CD4-positive, alpha-beta memory T cell (primary cell): ENCODE measurements at regions of chr12 and their contacts with region 1.

Region 1: DNA sequence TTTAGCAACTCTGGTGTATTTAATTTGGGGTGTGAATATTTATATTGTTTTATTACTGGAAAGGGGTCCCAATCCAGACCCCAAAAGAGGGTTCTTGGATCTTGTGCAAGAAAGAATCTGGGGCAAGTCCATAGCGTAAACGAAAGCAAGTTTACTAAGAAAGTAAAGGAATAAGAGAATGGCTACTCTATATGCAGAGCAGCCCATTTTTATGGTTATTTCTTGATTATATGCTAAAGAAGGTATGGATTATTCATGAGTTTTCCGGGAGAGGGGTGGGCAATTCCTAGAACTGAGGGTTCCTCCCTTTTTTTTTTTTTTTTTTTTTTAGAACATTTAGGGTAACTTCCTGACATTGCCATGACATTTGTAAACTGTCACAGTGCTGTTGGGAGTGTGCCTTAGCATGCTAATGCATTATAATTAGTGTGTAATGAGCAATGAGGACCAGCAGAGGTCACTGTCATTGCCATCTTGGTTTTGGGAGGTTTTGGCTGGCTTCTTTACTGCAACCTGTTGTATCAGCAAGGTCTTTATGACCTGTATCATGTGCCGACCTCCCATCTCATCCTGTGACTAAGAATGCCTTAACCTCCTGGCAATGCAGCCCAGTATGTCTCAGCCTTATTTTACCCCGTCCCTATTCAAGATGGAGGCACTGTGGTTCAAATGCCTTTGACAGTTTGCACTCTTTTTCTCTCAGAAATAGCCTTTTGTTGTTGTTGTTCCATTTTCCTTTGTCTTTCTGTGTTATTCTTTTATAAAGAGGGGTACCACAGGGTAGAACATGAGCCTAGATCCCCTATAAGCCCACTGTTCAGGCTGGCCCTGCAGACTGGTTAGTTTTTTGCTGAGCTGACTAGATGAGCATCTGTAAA is 75.5 kb upstream of the DCD start:
- DNase-seq: peak; percentile 38 to 54 (median 44)
- H3K4me3 ChIP-seq: no peak overlapping the region
- H3K4me3 Mint-ChIP-seq: no peak overlapping the region
- H3K27ac ChIP-seq: no peak overlapping the region
- H3K27ac Mint-ChIP-seq: no peak overlapping the region
- H3K4me1 ChIP-seq: peaks cover 4% of the 10 kb centered on the region
- H3K4me1 Mint-ChIP-seq: peaks cover 5 to 32% (median 12%) of the 10 kb centered on the region in 4 donors
- H3K27me3 ChIP-seq: no peaks in the 10 kb centered on the region
- H3K27me3 Mint-ChIP-seq: peaks cover 7 to 10% of the 10 kb centered on the region in 2 donors

Region 2: DNA sequence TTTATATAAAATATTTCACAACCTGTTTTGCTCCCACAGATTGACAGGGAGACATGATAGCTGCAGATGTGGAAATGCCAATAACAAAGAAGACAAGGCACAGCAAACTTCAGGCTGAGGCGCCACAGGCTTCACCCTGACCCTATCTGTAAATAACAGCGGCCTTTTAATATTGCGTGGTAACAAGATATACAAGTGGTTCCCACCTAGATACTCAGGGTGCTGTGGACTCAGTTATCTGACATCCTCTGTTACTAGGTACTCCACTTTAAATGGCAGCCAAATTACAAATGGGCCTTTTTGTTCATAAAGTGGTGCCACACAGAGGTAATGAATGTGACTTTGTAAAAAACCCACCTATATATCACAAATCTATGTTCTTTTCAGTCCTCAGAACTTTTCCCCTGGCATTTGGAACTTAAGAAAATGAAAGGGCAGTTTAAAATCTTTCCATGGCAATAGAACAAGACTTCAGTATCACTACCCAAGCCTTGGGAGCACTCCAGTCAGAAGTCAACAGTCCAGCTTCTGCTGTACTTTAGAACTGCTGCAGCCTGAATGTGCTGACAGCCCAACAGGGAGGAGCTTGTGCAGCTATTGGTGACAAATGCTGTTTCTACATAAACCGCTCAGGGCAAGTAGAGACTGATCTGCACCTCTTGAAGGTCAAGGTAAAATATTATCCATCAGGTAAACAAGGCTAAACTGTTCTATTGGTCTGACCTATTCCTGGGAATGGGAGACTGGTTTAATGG is 10.8 kb after region 1 on chr12:
- CTCF ChIA-PET with region 1: interaction called, 13 read pairs
- POLR2A ChIA-PET with region 1: no interaction called
- intact Hi-C with region 1: no loop called
- DNase-seq: no peak
- H3K4me3 ChIP-seq: no peak overlapping the region
- H3K4me3 Mint-ChIP-seq: peak overlapping the region in 1 of 8 donors; percentile 12
- H3K27ac ChIP-seq: no peak overlapping the region
- H3K27ac Mint-ChIP-seq: peak overlapping the region in 2 of 7 donors; percentile 45 to 81
- H3K4me1 ChIP-seq: peaks cover 28% of the 10 kb centered on the region
- H3K4me1 Mint-ChIP-seq: peaks cover 25 to 69% (median 29%) of the 10 kb centered on the region in 4 donors
- H3K27me3 ChIP-seq: no peaks in the 10 kb centered on the region
- H3K27me3 Mint-ChIP-seq: no peaks in the 10 kb centered on the region

Region 3: GRCh38 chr12:54740882-54741281 is 17.3 kb after region 1 on chr12:
- CTCF ChIA-PET with region 1: interaction called, 14 read pairs
- POLR2A ChIA-PET with region 1: no interaction called
- intact Hi-C with region 1: no loop called
- DNase-seq: peak in 4 of 5 donors; percentile 36 to 64 (median 52)
- H3K4me3 ChIP-seq: no peak overlapping the region
- H3K4me3 Mint-ChIP-seq: peak overlapping the region; percentile 26 to 78 (median 60)
- H3K27ac ChIP-seq: no peak overlapping the region
- H3K27ac Mint-ChIP-seq: peak overlapping the region; percentile 41 to 86 (median 63)
- H3K4me1 ChIP-seq: peaks cover 56% of the 10 kb centered on the region
- H3K4me1 Mint-ChIP-seq: peaks cover 52 to 95% (median 66%) of the 10 kb centered on the region in 4 donors
- H3K27me3 ChIP-seq: no peaks in the 10 kb centered on the region
- H3K27me3 Mint-ChIP-seq: no peaks in the 10 kb centered on the region